ENCODE measurements at regions of chr10 and their contacts with region 1.

Region 1: GRCh38 chr10:73625884-73626752 is 15.2 kb downstream of the MYOZ1 start:
- DNase-seq: peak; percentile 97 to 99 (median 98)
- ATAC-seq: peak; percentile 95
- H3K4me3 ChIP-seq: peak overlapping the region; percentile 86
- H3K27ac ChIP-seq: peak overlapping the region; percentile 87
- H3K4me1 ChIP-seq: peaks cover 7 to 14% of the 10 kb centered on the region in 2 experiments; a peak in 4 of 5 replicates
- H3K27me3 ChIP-seq: no peaks in the 10 kb centered on the region
- CTCF ChIP-seq: 0 out of 6 replicates have a peak, but pooled peaks of 1 of the 3 experiments have one; percentile 10
- EP300 ChIP-seq: no peak; the same call in 1 of the 2 replicates
- POLR2A ChIP-seq: peak; percentile 98
- RAD21 ChIP-seq: no peak

Region 2: GRCh38 chr10:73529089-73529832 is 96.9 kb before region 1 on chr10:
- CTCF ChIA-PET with region 1: interaction called, 3 read pairs
- POLR2A ChIA-PET with region 1: interaction called, 4 read pairs
- in situ Hi-C with region 1: no loop called
- intact Hi-C with region 1: loop called (anchors 5 kb)
- DNase-seq: peak; percentile 78 to 87 (median 82)
- ATAC-seq: peak; percentile 98
- H3K4me3 ChIP-seq: no peak overlapping the region
- H3K27ac ChIP-seq: no peak overlapping the region
- H3K4me1 ChIP-seq: peaks cover 0 to 2% of the 10 kb centered on the region in 2 experiments; a peak in 3 of 5 replicates
- H3K27me3 ChIP-seq: no peaks in the 10 kb centered on the region
- CTCF ChIP-seq: peak; percentile 82 to 98 (median 83)
- EP300 ChIP-seq: no peak; the same call in 1 of the 2 replicates
- POLR2A ChIP-seq: no peak
- RAD21 ChIP-seq: peak; percentile 100

Region 3: GRCh38 chr10:73591935-73592699 is 34.0 kb before region 1 on chr10:
- CTCF ChIA-PET with region 1: no interaction called
- POLR2A ChIA-PET with region 1: interaction called, 10 read pairs
- in situ Hi-C with region 1: no loop called
- intact Hi-C with region 1: loop called (anchors 5 kb)
- DNase-seq: peak; percentile 56 to 83 (median 74)
- ATAC-seq: peak; percentile 95
- H3K4me3 ChIP-seq: no peak overlapping the region
- H3K27ac ChIP-seq: peak overlapping the region; percentile 49; the same call in 1 of the 3 replicates
- H3K4me1 ChIP-seq: peaks cover 2 to 25% of the 10 kb centered on the region in 2 experiments
- H3K27me3 ChIP-seq: no peaks in the 10 kb centered on the region
- CTCF ChIP-seq: no peak
- EP300 ChIP-seq: 0 out of 2 replicates have a peak, but pooled peaks have one; percentile 18
- POLR2A ChIP-seq: no peak
- RAD21 ChIP-seq: no peak

Measured in K562 (cell line).